ENCODE measurements at regions of chr1 and their contacts with region 1.

Region 1: DNA sequence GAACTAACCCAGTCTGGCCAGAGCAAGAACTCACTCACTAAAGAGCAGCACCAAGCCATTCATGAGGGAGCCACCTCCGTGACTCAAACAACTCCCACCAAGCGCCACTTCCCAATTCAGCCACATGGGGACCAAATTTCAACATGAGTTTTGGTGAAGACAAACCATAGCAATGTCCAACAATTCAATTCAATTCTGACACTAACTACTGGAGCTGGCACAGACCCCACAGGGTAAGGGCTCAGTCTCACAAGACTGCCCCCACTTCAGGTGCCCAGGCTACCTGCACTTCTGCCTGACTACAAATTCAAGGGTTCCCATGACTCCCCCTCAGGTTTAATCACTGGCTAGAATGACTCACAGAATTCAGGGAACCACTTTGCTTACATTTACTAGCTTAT is 48.8 kb upstream of the RAP1A start:
- DNase-seq: peak; percentile 36
- H3K4me3 Mint-ChIP-seq: no peak overlapping the region
- H3K27ac Mint-ChIP-seq: no peak overlapping the region
- H3K4me1 Mint-ChIP-seq: peaks cover 5% of the 10 kb centered on the region
- H3K27me3 Mint-ChIP-seq: no peaks in the 10 kb centered on the region
- CTCF ChIP-seq: no peak

Region 2: DNA sequence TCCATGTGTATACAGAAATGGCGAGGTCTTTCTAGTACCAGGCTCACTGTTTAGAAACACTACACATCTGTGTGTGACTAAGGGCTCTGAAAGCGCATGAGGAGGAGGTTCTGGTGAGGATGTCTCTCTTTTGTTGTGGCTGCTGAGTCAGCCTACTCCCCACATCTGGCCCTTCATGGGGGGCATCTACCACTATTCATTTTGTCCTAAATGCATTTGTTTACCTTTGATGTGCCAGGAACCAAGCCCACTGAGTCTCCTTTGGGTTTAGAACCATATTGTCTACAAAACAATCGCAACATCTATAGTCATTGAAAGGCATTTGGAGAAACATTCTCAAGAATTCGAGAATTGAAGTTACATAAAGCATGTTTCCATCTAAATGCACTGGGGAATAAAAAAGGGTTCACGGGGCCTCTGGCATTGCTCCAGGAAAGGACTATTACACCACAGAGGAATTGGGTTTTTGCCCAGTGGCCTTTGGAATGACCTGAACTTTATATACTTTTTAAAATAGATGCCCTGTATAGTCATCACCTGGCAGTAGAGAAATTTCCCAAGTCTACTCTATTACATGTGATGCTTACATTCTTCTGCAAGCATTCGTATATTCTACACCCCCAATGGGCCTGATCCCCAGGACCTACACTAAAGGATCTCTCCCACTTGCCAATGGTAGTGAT is 32.3 kb before region 1 on chr1:
- CTCF ChIA-PET with region 1: interaction called, 4 read pairs
- POLR2A ChIA-PET with region 1: interaction called, 3 read pairs
- intact Hi-C with region 1: loop called (anchors 5 kb)
- DNase-seq: peak; percentile 74
- H3K4me3 Mint-ChIP-seq: no peak overlapping the region
- H3K27ac Mint-ChIP-seq: no peak overlapping the region
- H3K4me1 Mint-ChIP-seq: peaks cover 19% of the 10 kb centered on the region
- H3K27me3 Mint-ChIP-seq: no peaks in the 10 kb centered on the region
- CTCF ChIP-seq: no peak

Region 3: GRCh38 chr1:111778541-111779051 is 207.8 kb after region 1 on chr1:
- CTCF ChIA-PET with region 1: no interaction called
- POLR2A ChIA-PET with region 1: no interaction called
- intact Hi-C with region 1: no loop called
- DNase-seq: no peak
- H3K4me3 Mint-ChIP-seq: no peak overlapping the region
- H3K27ac Mint-ChIP-seq: no peak overlapping the region
- H3K4me1 Mint-ChIP-seq: no peaks in the 10 kb centered on the region
- H3K27me3 Mint-ChIP-seq: peaks cover 38% of the 10 kb centered on the region
- CTCF ChIP-seq: no peak

Measured in MCF 10A (cell line).